HEK293T (cell line): ENCODE measurements at regions of chr17 and their contacts with region 1.

Region 1: GRCh38 chr17:79991140-79991923 is 44.3 kb downstream of the TBC1D16 start:
- DNase-seq: peak; percentile 91

Region 2: DNA sequence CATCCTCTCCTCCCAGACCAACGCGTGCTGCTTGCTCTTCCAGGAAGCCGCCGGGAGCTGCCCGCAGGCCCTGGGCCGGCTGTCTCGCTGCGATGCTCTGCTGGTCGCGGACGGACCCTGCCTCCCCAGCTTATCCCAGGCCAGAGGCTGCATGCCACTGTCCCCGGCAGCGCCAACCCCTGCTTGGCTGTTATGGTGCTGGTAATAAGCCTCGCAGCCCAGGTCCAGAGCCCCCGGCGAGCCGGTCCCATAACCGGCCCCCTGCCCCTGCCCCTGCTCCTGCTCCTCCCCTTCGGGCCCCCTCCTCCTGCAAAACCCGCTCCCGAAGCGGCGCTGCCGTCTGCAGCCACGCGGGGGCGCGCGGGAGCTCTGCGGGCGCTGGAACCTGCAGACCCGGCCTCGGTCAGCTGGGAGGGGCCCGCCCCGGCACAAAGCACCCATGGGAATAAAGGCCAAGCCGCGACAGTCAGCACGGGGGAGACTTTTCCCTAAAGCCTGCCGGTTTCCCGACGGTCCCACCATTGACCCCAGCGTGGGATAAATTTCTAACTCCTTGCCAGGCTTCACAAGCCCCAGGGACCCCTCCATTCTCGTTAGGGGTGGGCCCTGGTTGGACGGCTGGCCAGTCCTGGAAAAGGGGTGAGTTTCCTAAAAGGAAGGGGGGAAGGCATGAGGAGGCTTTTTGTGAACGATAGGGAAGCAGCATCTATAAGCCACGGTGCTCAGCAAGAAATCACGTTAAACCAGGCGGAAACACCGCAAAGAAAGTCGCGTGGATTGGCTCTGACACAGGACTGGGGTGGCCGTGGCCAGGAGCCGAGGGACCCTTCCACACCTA is 249.4 kb before region 1 on chr17:
- CTCF ChIA-PET with region 1: interaction called, 4 read pairs
- POLR2A ChIA-PET with region 1: interaction called, 12 read pairs
- DNase-seq: peak; percentile 94

Region 3: GRCh38 chr17:79796763-79797491 is 194.4 kb before region 1 on chr17 and contains the start of gene CBX8:
- CTCF ChIA-PET with region 1: no interaction called
- POLR2A ChIA-PET with region 1: interaction called, 15 read pairs
- DNase-seq: peak; percentile 99

Region 4: DNA sequence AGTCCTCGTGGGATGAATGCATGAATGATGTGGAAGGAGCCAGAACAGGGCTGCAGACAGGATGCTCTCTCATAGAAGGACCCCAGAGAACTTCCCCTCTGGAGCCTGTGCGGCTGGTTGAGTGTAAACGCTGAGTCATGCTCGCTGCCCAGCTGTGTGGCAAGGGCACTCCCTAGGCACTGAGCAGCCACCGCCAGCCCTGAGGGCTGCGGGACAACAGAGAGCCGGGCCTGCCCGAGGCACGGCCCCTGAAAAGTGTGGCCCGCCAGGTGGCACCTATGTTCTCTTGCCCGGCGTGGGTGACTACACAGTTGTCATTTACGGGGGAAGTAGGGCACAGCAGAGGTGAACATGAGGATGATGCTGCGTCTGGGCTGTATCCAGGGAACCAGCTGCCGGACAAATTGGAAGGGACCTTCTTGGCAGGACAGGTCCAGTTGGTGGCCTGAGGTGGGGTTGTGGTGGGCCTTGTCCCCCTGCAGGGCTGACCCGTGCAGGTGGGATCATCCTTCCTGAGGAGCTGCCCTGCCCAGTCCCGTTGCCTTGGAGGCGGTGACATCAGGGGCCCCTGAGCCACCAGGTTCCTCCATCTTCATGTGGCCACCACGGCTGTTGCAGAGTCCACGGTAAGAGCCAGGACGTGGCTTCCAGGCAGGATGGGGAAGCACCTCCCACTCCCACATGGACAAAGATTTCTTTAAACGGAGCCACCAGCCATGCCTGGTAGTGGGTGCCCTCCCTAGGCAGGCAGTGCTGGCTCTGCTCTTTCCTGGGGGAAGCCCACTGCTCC is 57.3 kb before region 1 on chr17:
- CTCF ChIA-PET with region 1: no interaction called
- POLR2A ChIA-PET with region 1: interaction called, 12 read pairs
- DNase-seq: no peak

Region 5: GRCh38 chr17:80008383-80008840 is 17.1 kb after region 1 on chr17:
- CTCF ChIA-PET with region 1: interaction called, 29 read pairs
- POLR2A ChIA-PET with region 1: interaction called, 35 read pairs
- DNase-seq: peak; percentile 93